Activated T-helper 1 cell treated with anti-CD3 and anti-CD28 coated beads, Interleukin-12 subunit alpha, Interleukin-12 subunit beta, Interleukin-2, Interleukin-4 antibody, amounts not matched to agents 30 ng/mL and 10 ng/mL and 1 ng/mL, durations not matched to agents 14 hours and 24 hours and 36 hours (primary cell): ENCODE measurements at regions of chr2 and their contacts with region 1.

Region 1: GRCh38 chr2:208265801-208266552 is at the start of gene PIKFYVE:
- DNase-seq: peak; percentile 88
- H3K4me3 Mint-ChIP-seq: peak within 1 kb of the TSS; percentile 89
- H3K27ac Mint-ChIP-seq: peak within 1 kb of the TSS; percentile 92
- H3K4me1 Mint-ChIP-seq: peaks cover 46% of the 10 kb centered on the region
- H3K27me3 Mint-ChIP-seq: no peaks in the 10 kb centered on the region
- total RNA-seq, gene PIKFYVE: 28.7 and 33.5 TPM in 2 replicates

Region 2: DNA sequence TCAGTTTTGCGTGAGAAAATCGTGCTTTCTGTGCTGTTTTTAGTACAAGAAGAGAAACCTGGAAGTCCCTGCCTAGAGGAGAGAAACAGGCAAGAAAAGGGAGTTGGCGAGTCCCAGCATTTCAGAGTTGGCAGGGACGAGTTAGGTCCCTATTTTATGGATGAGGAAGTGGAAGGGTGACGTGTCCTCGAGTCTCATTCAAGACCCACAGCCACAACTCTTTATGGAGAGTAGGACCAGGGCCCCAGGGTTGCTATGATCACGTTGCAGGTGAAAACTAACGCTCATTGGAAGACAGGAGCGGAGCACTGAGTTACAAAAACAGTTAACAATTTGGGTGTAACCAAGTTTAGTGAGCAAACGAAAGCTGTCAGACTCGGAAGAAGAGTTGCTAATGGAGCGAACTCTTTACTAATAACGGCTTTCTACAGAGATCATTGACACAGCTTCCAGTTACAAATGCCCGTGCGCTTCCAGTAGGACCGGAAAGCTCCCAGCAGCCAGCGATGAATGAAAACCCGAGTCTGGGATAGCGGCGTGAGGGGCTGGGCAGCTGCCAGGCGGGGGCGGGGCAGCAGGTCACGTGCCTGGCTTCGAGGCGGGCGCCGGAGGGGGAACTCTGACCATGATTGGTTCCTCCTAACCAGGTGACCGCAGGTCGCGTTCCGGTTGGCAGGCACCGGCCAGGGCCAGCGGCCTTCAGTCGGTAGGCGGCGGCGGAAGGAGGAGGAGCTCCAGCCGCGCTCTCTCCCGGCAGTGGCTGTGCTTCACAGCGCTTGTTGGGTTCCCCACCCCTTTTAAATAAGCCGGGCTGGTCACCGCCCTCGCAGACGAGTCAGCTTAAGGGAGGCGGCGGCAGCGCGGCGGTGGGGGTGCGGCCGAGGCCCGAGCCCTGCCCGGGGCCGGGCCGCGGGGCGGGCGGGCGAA is 554.9 kb before region 1 on chr2 and contains the start of gene CCNYL1:
- intact Hi-C with region 1: loop called (anchors 1 kb)
- DNase-seq: peak; percentile 98
- H3K4me3 Mint-ChIP-seq: peak within 1 kb of the TSS; percentile 96
- H3K27ac Mint-ChIP-seq: peak within 1 kb of the TSS; percentile 76
- H3K4me1 Mint-ChIP-seq: peaks cover 36% of the 10 kb centered on the region
- H3K27me3 Mint-ChIP-seq: no peaks in the 10 kb centered on the region
- total RNA-seq, gene CCNYL1: 6.8 and 8.7 TPM in 2 replicates

Region 3: GRCh38 chr2:208175069-208175839 is 90.7 kb before region 1 on chr2:
- intact Hi-C with region 1: loop called (anchors 5 kb)
- DNase-seq: peak; percentile 36
- H3K4me3 Mint-ChIP-seq: no peak overlapping the region
- H3K27ac Mint-ChIP-seq: no peak overlapping the region
- H3K4me1 Mint-ChIP-seq: peaks cover 6% of the 10 kb centered on the region
- H3K27me3 Mint-ChIP-seq: peaks cover 7% of the 10 kb centered on the region

Region 4: DNA sequence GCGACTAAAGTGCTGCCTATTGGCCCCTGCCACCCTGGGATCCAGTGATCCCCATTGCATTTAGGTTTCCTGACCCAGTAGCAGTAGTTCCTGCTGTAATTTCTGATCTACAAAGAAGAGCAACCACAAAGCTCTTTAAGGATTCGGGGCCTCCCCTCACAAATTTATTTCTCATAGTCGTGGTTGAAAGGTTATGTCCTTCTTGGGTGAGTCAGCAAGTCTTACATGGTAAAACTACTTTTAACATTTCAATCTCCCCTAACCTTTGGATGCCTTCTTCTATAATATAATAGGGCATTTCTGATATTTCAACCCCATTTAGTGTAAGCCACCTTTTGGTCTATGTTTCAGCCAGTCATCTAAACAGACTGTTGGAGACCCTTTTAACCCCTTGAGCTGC is 15.0 kb after region 1 on chr2:
- intact Hi-C with region 1: loop called (anchors 2 kb)
- DNase-seq: no peak
- H3K4me3 Mint-ChIP-seq: no peak overlapping the region
- H3K27ac Mint-ChIP-seq: no peak overlapping the region
- H3K4me1 Mint-ChIP-seq: peaks cover 24% of the 10 kb centered on the region
- H3K27me3 Mint-ChIP-seq: no peaks in the 10 kb centered on the region

Region 5: DNA sequence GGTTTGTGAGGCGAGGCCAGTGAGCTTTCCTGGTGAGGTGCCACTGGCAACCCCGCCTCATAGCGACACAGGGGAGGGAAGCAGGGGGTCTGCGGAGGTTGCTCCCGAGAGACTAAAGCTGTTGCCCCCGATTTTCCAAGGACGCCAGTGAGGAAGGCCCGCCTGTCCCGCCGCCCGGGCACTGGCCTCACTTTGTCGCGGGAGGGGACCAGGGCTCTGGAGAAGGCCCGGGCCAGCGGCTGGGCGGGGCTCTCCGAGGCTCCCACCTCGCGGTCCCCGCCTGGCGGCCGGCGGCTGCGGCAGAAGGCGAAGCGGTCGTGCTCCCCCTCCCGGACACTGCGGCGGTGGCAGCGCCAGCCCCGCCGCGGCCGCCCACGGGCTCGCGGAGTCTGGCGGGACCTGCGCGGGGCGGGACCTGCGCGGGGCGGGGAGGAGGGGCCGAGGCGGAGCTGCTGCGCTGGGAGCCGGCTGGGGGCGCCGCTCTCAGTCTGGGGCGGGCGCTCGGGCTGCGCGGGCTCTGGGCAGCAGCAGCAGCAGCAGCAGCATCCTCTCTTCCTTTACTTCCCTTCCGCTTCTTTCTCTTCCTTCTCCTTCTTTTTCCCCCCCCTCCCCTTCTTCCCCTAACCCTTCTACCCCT is 1157.7 kb after region 1 on chr2 and contains the start of gene MAP2:
- intact Hi-C with region 1: loop called (anchors 5 kb)
- DNase-seq: peak; percentile 63
- H3K4me3 Mint-ChIP-seq: peak within 1 kb of the TSS; percentile 76
- H3K27ac Mint-ChIP-seq: no peak within 1 kb of the TSS
- H3K4me1 Mint-ChIP-seq: peaks cover 14% of the 10 kb centered on the region
- H3K27me3 Mint-ChIP-seq: peaks cover 20% of the 10 kb centered on the region
- total RNA-seq, gene MAP2: not detected in 2 replicates

Region 6: DNA sequence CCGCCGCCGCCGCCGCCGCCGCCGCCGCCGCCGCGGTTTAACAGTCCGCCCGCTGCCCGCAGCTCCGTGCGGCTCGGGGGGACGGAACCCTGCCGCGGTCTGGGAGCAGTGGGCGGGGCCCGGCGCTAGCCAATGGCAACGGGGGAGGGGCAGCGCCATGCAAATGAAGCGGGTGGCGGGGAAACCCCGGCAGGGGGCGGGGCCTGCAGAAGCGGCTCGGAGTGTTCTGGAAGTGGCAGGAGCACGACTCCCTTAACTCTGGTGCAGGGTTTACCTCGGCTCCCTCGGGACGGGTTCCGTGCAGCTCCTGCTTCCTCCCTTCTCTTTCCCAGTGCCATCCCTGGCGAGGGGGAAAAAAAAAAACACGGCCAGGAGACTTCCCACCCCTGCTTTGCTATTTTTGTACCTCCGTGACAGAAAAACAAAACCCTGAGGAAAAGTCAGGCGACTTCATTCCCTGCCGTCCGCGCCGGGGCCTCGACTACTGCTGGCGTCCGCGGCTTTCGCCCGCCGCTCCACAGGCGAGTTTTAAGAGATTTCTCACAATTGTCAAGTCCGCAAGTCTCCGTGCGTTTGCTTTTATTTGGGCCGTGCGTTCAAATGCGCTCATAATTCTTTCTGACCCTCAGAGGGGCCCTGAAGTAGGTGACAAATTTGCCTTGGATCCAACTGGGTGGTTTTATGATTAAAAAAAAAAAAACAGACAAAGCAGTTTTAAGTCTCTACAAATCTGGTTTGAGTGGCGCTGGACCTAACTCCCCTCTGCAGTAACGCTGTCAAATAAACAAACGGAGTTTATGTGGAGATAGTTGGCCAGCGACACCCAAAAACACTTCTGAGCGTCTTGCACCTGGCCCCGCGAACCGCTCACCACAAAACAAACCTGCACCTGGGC is 1905.6 kb after region 1 on chr2 and contains the start of gene KANSL1L:
- intact Hi-C with region 1: loop called (anchors 5 kb)
- DNase-seq: peak; percentile 95
- H3K4me3 Mint-ChIP-seq: peak within 1 kb of the TSS; percentile 98
- H3K27ac Mint-ChIP-seq: peak within 1 kb of the TSS; percentile 96
- H3K4me1 Mint-ChIP-seq: peaks cover 30% of the 10 kb centered on the region
- H3K27me3 Mint-ChIP-seq: peaks cover 31% of the 10 kb centered on the region
- total RNA-seq, gene KANSL1L: 3.0 and 3.6 TPM in 2 replicates